ENCODE measurements at regions of chr10 and their contacts with region 1.

Region 1: DNA sequence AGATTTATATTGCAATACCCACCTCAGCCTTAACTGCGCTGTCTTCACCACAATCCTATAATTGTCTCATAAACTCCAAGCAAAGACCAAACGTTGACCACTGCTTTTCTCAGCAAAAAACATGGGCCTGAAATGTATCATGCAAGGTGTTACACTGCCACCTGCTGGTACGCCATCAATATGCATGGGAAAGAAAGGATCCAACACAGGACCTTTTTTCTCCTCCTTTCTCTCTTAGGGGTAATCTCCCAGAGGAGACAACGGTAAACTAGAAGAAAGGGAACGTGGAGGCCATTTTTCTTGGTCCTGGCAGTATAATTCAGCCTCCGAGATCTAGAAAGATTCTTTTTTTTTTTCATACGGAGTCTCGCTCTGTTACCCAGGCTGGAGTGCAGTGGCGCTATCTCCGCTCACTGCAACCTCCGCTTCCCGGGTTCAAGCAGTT is 79.1 kb upstream of the MPP7 start:
- DNase-seq: peak; percentile 61
- H3K4me3 ChIP-seq: no peak overlapping the region
- H3K27ac ChIP-seq: no peak overlapping the region
- H3K4me1 ChIP-seq: no peaks in the 10 kb centered on the region
- H3K27me3 ChIP-seq: peaks cover 13% of the 10 kb centered on the region
- CTCF ChIP-seq: peak; percentile 93

Region 2: GRCh38 chr10:27819781-27820531 is 562.0 kb before region 1 on chr10:
- intact Hi-C with region 1: no loop called
- DNase-seq: peak; percentile 61
- H3K4me3 ChIP-seq: peak overlapping the region; percentile 25
- H3K27ac ChIP-seq: peak overlapping the region; percentile 81
- H3K4me1 ChIP-seq: peaks cover 25% of the 10 kb centered on the region
- H3K27me3 ChIP-seq: no peaks in the 10 kb centered on the region
- CTCF ChIP-seq: no peak

Region 3: DNA sequence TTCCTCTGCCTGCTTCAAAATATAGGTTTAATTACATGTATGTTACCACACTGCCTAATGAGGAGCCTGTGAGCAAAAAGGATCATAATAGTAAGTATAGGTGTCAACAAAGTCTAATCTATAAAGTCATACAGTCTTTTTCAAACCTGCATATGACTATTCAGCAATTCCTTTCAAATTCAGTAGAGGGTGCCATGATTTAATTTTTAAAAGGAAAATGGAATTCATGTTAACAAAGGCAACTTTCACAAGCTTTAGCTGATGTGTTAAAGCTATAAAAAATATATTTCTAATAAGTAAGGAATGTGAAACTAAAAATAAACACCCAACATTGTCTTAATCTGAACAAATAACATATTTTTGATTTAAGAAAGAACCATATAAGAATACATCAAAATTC is 131.1 kb before region 1 on chr10:
- intact Hi-C with region 1: loop called (anchors 5 kb)
- DNase-seq: no peak
- H3K4me3 ChIP-seq: no peak overlapping the region
- H3K27ac ChIP-seq: no peak overlapping the region
- H3K4me1 ChIP-seq: peaks cover 21% of the 10 kb centered on the region
- H3K27me3 ChIP-seq: no peaks in the 10 kb centered on the region
- CTCF ChIP-seq: peak; percentile 65

Region 4: DNA sequence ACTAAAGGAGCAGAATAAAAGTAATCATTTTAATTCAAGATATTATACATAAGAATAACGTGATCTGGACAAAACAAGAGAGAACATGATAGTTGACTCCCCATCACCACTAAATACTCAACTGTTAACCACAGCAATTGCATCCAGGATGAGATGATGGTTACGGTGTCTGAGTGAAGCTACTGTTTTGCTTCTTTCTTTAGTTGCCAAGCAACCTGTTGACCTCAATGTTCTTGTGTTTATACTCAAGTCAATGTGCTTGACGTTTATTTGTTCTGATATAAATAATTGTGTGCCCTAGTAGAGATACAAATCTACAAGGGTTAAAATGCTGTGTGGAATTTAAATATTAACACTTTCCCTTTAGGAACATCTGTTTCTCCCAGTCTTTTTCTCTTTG is 47.6 kb before region 1 on chr10:
- intact Hi-C with region 1: loop called (anchors 5 kb)
- DNase-seq: no peak
- H3K4me3 ChIP-seq: no peak overlapping the region
- H3K27ac ChIP-seq: peak overlapping the region; percentile 5
- H3K4me1 ChIP-seq: peaks cover 5% of the 10 kb centered on the region
- H3K27me3 ChIP-seq: no peaks in the 10 kb centered on the region
- CTCF ChIP-seq: no peak